H1 (cell line): ENCODE measurements at regions of chr4 and their contacts with region 1.

Region 1: DNA sequence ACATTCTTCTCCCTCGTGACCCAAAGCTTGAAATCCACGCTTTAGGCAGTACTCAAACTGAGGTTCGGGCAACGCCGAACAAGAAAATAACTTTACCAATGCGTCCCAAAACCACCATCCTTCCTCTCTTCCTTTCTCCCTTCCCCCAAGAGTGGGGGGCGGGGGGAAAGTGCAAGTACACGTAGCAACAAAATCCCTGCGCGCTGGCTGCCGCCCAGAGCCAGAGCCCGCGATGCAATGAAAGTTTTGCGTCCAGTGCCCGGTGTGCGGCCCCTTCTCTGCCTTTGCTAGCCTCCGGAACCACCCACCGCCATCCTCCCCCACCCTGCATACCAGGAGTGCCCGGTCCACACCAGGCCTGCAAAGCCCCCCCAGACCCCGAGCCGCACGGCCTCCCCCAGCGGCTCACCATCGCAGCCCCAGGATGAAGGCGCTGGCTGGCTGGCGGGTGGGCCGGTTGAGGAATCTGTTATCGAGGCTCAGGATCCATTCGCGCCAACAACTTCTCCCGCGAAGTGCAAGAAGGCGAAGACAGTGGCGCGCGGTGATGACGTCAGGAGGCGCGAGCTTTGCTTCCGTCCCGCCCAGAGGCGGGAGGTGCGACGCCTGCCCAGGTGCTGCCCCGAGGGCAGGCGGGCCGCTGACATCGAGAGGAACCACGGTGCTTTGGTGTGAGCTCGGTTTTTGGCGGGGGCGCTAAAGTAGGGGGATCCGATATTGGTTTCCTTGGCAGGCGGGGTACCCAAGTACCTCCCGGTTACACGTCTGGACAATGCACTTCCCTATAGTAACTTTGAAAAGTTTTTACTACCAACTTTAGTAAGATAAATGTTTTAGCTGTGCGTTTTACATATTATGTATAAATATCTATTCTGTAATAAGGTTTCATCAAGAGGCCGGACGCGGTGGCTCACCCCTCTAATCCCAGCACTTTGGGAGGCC is at the start of gene RFC1:
- DNase-seq: peak; percentile 91 to 97
- H3K4me3 ChIP-seq: peak within 1 kb of the TSS; percentile 80 to 93 (median 81)
- H3K27ac ChIP-seq: peak within 1 kb of the TSS; percentile 92
- H3K4me1 ChIP-seq: peaks cover 0 to 4% (median 0%) of the 10 kb centered on the region in 4 experiments; a peak in 1 of 7 replicates
- H3K27me3 ChIP-seq: peaks cover 0 to 12% (median 6%) of the 10 kb centered on the region in 4 experiments; a peak in 5 of 7 replicates
- CTCF ChIP-seq: no peak
- EP300 ChIP-seq: 0 out of 3 replicates have a peak, but pooled peaks of 1 of the 2 experiments have one; percentile 21
- POLR2A ChIP-seq: peak; percentile 71 to 91
- RAD21 ChIP-seq: no peak
- total RNA-seq, gene RFC1: 78.0 and 83.8 TPM in 2 replicates

Region 2: DNA sequence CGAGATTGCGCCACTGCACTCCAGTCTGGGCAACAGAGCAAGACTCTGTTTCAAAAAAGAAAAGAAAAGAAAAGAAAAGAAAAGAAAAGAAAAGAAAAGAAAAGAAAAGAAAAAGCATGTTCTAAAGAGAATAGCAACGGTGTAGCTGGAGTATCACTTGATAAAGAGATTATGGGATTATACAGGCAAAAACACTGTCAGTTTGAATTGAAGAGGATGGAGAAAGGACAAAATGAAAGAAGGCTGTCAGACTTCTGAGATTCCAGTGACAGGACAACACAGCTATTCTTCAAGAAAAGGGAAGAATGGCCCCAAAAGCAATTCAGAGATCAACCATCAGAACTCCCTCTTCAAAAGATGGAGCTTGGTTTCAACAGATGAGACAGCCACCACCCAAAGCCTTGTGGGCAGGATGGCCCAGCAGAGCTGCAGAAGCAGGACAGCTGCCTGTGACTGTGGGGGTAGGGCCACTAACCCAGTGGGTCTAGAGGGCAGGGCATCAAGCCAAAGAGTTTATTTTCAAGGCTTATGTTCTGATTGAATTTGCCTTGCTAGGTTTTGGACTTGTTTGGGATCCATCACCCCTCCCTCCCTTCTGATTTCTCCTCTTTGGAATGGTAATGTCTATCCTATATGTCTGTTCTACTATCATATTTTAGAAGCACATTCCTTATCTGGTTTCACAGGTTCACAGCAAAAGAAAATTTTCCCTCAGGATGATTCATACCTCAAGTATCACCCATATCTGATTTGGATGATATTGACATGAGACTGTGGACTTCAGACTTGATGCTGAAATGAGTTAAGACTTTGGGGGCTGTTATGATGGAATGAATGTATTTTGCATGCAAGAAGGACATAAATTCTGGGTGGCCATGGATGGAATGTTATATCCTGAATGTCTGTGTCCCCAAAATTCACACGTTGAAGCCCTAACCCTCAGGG is 17.5 kb before region 1 on chr4:
- CTCF ChIA-PET with region 1: interaction called, 3 read pairs
- POLR2A ChIA-PET with region 1: interaction called, 15 read pairs
- DNase-seq: no peak
- H3K4me3 ChIP-seq: no peak overlapping the region
- H3K27ac ChIP-seq: no peak overlapping the region
- H3K4me1 ChIP-seq: no peaks in the 10 kb centered on the region
- H3K27me3 ChIP-seq: no peaks in the 10 kb centered on the region
- CTCF ChIP-seq: no peak
- EP300 ChIP-seq: no peak
- POLR2A ChIP-seq: no peak
- RAD21 ChIP-seq: no peak

Region 3: GRCh38 chr4:39383690-39384089 is 17.6 kb after region 1 on chr4:
- CTCF ChIA-PET with region 1: interaction called, 4 read pairs
- POLR2A ChIA-PET with region 1: interaction called, 19 read pairs
- DNase-seq: no peak
- H3K4me3 ChIP-seq: no peak overlapping the region
- H3K27ac ChIP-seq: no peak overlapping the region
- H3K4me1 ChIP-seq: peaks cover 0 to 5% (median 3%) of the 10 kb centered on the region in 4 experiments; a peak in 3 of 7 replicates
- H3K27me3 ChIP-seq: no peaks in the 10 kb centered on the region
- CTCF ChIP-seq: peak in 1 of 3 experiments; percentile 35; a peak in 1 of 4 replicates
- EP300 ChIP-seq: no peak
- POLR2A ChIP-seq: no peak
- RAD21 ChIP-seq: peak in 1 of 2 experiments; percentile 23; a peak in 1 of 4 replicates

Region 4: DNA sequence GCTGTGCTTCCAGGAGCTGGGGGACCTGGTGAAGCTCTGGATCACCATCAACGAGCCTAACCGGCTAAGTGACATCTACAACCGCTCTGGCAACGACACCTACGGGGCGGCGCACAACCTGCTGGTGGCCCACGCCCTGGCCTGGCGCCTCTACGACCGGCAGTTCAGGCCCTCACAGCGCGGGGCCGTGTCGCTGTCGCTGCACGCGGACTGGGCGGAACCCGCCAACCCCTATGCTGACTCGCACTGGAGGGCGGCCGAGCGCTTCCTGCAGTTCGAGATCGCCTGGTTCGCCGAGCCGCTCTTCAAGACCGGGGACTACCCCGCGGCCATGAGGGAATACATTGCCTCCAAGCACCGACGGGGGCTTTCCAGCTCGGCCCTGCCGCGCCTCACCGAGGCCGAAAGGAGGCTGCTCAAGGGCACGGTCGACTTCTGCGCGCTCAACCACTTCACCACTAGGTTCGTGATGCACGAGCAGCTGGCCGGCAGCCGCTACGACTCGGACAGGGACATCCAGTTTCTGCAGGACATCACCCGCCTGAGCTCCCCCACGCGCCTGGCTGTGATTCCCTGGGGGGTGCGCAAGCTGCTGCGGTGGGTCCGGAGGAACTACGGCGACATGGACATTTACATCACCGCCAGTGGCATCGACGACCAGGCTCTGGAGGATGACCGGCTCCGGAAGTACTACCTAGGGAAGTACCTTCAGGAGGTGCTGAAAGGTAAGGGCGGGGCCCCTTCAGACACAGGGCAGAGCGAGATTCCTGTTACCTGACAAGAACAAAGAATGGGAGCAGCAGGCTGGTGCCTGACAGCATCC is 80.9 kb after region 1 on chr4:
- CTCF ChIA-PET with region 1: interaction called, 8 read pairs
- POLR2A ChIA-PET with region 1: interaction called, 18 read pairs
- DNase-seq: peak; percentile 74 to 80
- H3K4me3 ChIP-seq: peak overlapping the region; percentile 46 to 63 (median 50)
- H3K27ac ChIP-seq: no peak overlapping the region
- H3K4me1 ChIP-seq: peaks cover 0 to 7% (median 2%) of the 10 kb centered on the region in 4 experiments; a peak in 3 of 7 replicates
- H3K27me3 ChIP-seq: no peaks in the 10 kb centered on the region; a peak in 1 of 7 replicates
- CTCF ChIP-seq: peak; percentile 38 to 53 (median 52)
- EP300 ChIP-seq: no peak
- POLR2A ChIP-seq: peak in 1 of 2 experiments; percentile 60; a peak in 1 of 3 replicates
- RAD21 ChIP-seq: peak in 1 of 2 experiments; percentile 20; a peak in 2 of 4 replicates

Region 5: GRCh38 chr4:39530682-39531081 is 164.6 kb after region 1 on chr4:
- CTCF ChIA-PET with region 1: no interaction called
- POLR2A ChIA-PET with region 1: no interaction called
- DNase-seq: no peak
- H3K4me3 ChIP-seq: no peak overlapping the region
- H3K27ac ChIP-seq: no peak overlapping the region
- H3K4me1 ChIP-seq: peaks cover 0 to 3% (median 0%) of the 10 kb centered on the region in 4 experiments; a peak in 2 of 7 replicates
- H3K27me3 ChIP-seq: no peaks in the 10 kb centered on the region
- CTCF ChIP-seq: no peak
- EP300 ChIP-seq: no peak
- POLR2A ChIP-seq: no peak
- RAD21 ChIP-seq: no peak